ENCODE measurements at regions of chr11 and their contacts with region 1.

Region 1: DNA sequence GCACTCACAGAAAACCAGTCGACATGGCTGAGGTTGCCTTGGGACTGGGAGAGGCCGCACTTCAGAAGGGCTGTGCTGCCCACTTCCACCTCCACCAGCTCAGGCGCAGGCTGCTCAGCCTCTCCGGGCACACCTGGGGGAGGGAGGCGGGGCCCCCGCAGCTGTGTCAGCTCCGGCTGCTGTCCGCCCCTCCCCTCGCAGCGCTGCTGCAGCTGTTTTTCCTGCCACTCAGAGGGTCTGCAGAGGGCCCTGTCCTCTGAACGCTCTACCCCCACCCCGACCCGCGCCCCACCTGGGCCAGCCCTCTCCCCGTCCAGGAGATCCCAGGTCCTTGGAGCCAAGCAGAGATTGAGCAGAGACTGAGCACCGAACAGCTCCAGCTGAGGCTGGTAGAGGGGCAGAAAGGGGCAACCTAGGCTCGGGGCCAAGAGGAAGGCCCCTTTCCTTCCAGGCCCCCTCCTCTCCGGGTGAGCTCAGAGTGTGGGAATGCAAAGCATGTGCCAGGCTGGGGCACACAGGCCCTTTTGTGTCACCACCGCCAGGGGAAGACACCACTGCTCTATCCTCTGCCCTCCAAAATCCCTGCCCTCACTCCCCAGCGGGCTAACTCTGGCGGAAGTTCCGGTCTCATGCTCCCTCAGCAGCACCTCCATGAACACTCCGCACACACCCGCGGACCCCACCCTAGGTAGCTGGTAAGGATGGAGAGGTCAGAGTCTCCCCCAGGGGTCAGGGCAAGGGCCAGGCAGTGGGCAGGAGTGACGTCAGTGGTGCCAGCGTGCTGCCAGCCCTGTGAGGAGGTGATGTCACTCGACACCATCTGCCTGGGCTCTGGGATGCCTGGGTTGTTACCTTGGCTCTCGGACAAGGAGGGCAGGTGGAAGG is 1.6 kb downstream of the MCAM start:
- DNase-seq: no peak
- ATAC-seq: peak; percentile 75
- H3K4me3 Mint-ChIP-seq: peak overlapping the region; percentile 73
- H3K27ac Mint-ChIP-seq: no peak overlapping the region
- H3K4me1 Mint-ChIP-seq: peaks cover 39% of the 10 kb centered on the region
- H3K27me3 Mint-ChIP-seq: peaks cover 26% of the 10 kb centered on the region
- CTCF ChIP-seq: no peak

Region 2: GRCh38 chr11:119205574-119206510 is 109.5 kb before region 1 on chr11 and contains the start of gene CBL:
- CTCF ChIA-PET with region 1: no interaction called
- POLR2A ChIA-PET with region 1: no interaction called
- intact Hi-C with region 1: no loop called
- DNase-seq: peak; percentile 95
- ATAC-seq: peak; percentile 86
- H3K4me3 Mint-ChIP-seq: peak within 1 kb of the TSS; percentile 96
- H3K27ac Mint-ChIP-seq: peak within 1 kb of the TSS; percentile 90
- H3K4me1 Mint-ChIP-seq: peaks cover 31% of the 10 kb centered on the region
- H3K27me3 Mint-ChIP-seq: no peaks in the 10 kb centered on the region
- CTCF ChIP-seq: no peak
- total RNA-seq, gene CBL: 26.2 and 27.8 TPM in 2 replicates

Region 3: DNA sequence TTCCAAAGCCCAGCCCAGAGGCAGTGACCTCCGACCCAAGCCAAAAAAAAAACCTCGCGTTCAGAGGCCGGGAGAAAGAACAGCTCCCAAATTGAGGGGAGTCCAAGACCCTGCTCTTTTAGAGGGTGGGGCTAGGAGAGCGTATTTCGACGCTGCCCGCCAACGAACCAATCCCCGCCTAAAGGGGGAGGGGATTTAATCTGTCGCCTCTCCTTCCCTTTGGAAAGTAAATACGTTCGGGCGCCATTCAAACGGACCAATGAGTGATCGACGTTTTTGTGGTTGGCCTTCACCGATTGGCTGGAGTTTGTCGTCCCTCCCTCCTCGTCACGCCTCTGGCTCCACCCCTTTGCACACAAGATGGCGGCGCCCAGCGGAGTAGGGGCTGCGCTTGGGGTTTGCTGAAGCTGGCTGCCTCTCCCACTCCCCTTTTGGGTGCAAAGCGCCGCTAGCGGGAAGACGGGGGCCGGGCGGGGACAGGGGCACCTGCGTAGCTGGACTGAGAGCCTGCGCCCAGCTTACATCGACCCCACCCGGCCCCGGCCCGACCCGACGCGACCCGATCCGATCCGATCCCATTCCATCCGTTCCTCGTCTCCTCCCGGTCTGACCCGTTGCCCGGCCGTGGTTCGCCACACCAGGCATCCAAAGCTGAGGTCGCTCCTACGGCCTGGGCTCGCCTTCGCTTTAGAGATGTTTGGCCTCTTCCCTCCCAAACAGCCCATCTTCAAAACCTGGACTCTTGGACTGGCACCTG is 19.0 kb after region 1 on chr11 and contains the start of gene RNF26:
- CTCF ChIA-PET with region 1: interaction called, 38 read pairs
- POLR2A ChIA-PET with region 1: interaction called, 10 read pairs
- intact Hi-C with region 1: loop called (anchors 1 kb)
- DNase-seq: peak; percentile 87
- ATAC-seq: peak; percentile 97
- H3K4me3 Mint-ChIP-seq: peak within 1 kb of the TSS; percentile 99
- H3K27ac Mint-ChIP-seq: peak within 1 kb of the TSS; percentile 93
- H3K4me1 Mint-ChIP-seq: peaks cover 31% of the 10 kb centered on the region
- H3K27me3 Mint-ChIP-seq: peaks cover 9% of the 10 kb centered on the region
- CTCF ChIP-seq: no peak
- total RNA-seq, gene RNF26: 20.1 and 21.2 TPM in 2 replicates

Region 4: GRCh38 chr11:120024046-120024445 is 708.7 kb after region 1 on chr11:
- CTCF ChIA-PET with region 1: no interaction called
- POLR2A ChIA-PET with region 1: no interaction called
- intact Hi-C with region 1: no loop called
- DNase-seq: no peak
- ATAC-seq: no peak
- H3K4me3 Mint-ChIP-seq: no peak overlapping the region
- H3K27ac Mint-ChIP-seq: no peak overlapping the region
- H3K4me1 Mint-ChIP-seq: no peaks in the 10 kb centered on the region
- H3K27me3 Mint-ChIP-seq: peaks cover under 1% of the 10 kb centered on the region
- CTCF ChIP-seq: no peak

Measured in activated B cell treated with CpG ODN at 0.5 μM for 24 hours (primary cell).